T-cell (primary cell): ENCODE measurements at regions of chr3 and their contacts with region 1.

Region 1: GRCh38 chr3:56801662-56802377 is at the start of gene ARHGEF3:
- DNase-seq: peak; percentile 70 to 95 (median 83)
- ATAC-seq: peak; percentile 84 to 91 (median 86)
- H3K4me3 ChIP-seq: peak within 1 kb of the TSS; percentile 80 to 88
- H3K4me3 Mint-ChIP-seq: peak within 1 kb of the TSS; percentile 90 to 97 (median 93)
- H3K27ac ChIP-seq: peak within 1 kb of the TSS; percentile 60
- H3K27ac Mint-ChIP-seq: peak within 1 kb of the TSS; percentile 85 to 92
- H3K4me1 ChIP-seq: peaks cover 16 to 33% of the 10 kb centered on the region in 2 experiments
- H3K4me1 Mint-ChIP-seq: peaks cover 39 to 49% (median 40%) of the 10 kb centered on the region in 3 donors
- H3K27me3 ChIP-seq: no peaks in the 10 kb centered on the region
- H3K27me3 Mint-ChIP-seq: no peaks in the 10 kb centered on the region
- total RNA-seq, gene ARHGEF3: 93.4 to 132 (median 124) TPM

Region 2: GRCh38 chr3:56702490-56703315 is 99.1 kb before region 1 on chr3:
- CTCF ChIA-PET with region 1: interaction called, 11 to 181 read pairs
- POLR2A ChIA-PET with region 1: interaction called, 4 to 14 read pairs
- DNase-seq: peak in 27 of 35 experiments; percentile 13 to 88 (median 43)
- ATAC-seq: peak; percentile 70 to 79 (median 72)
- H3K4me3 ChIP-seq: no peak overlapping the region
- H3K4me3 Mint-ChIP-seq: no peak overlapping the region
- H3K27ac ChIP-seq: no peak overlapping the region
- H3K27ac Mint-ChIP-seq: peak overlapping the region in 1 of 2 donors; percentile 28
- H3K4me1 ChIP-seq: peaks cover 5 to 15% of the 10 kb centered on the region in 2 experiments
- H3K4me1 Mint-ChIP-seq: peaks cover 19 to 27% (median 24%) of the 10 kb centered on the region in 3 donors
- H3K27me3 ChIP-seq: no peaks in the 10 kb centered on the region
- H3K27me3 Mint-ChIP-seq: no peaks in the 10 kb centered on the region

Region 3: GRCh38 chr3:56753206-56753820 is 48.5 kb before region 1 on chr3:
- CTCF ChIA-PET with region 1: interaction called, 11 to 108 read pairs
- POLR2A ChIA-PET with region 1: interaction called in 1 of 2 experiments, 7 read pairs
- DNase-seq: peak in 8 of 35 experiments; percentile 7 to 45 (median 22)
- ATAC-seq: peak in 3 of 4 experiments; percentile 70 to 78 (median 73)
- H3K4me3 ChIP-seq: no peak overlapping the region
- H3K4me3 Mint-ChIP-seq: peak overlapping the region; percentile 81 to 89 (median 87)
- H3K27ac ChIP-seq: peak overlapping the region; percentile 72
- H3K27ac Mint-ChIP-seq: peak overlapping the region; percentile 99
- H3K4me1 ChIP-seq: peaks cover 34 to 50% of the 10 kb centered on the region in 2 experiments
- H3K4me1 Mint-ChIP-seq: peaks cover 70 to 80% (median 73%) of the 10 kb centered on the region in 3 donors
- H3K27me3 ChIP-seq: no peaks in the 10 kb centered on the region
- H3K27me3 Mint-ChIP-seq: no peaks in the 10 kb centered on the region

Region 4: DNA sequence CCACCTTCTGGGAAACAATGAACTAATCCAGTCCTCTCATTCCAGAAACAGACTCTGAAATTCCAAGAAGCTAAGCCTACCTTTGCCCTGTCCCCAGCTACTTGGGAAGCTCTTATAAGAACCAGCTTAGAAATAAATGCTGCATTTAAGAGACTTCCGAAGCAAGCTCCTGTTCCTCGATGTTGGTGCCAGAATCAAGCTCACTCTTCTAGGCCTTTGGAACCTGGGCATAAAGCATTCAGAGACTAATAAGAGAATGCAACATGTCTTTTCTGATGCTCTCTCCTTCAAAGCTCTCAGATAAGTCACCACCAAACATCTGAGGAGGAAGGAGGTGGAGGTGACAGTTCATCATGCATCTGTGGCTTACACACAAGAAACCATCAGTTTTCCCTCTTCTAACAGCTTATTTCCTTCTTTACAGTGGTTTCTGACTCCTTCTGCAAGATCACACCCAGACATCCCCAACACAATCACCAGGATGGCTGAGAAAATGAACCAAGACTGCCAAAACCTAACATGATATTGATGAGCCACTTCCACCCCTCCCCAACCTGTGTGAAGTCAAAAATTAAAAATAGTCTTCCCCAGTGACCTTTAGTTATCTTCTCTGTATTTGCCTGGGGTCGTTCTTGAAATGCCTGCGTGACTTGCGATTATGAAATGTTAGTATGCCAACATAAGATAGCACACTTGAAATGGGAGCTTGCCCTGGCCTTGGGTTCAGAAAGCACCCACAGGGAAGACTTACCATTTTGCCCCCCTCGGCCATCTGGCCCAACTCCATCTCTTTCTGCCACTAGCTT is 11.6 kb before region 1 on chr3:
- CTCF ChIA-PET with region 1: interaction called, 8 to 126 read pairs
- POLR2A ChIA-PET with region 1: interaction called, 23 read pairs
- DNase-seq: peak in 14 of 35 experiments; percentile 9 to 69 (median 28)
- ATAC-seq: peak; percentile 63 to 79 (median 72)
- H3K4me3 ChIP-seq: peak overlapping the region in 1 of 2 donors; percentile 26
- H3K4me3 Mint-ChIP-seq: peak overlapping the region; percentile 17 to 70 (median 52)
- H3K27ac ChIP-seq: peak overlapping the region; percentile 86
- H3K27ac Mint-ChIP-seq: peak overlapping the region; percentile 97 to 99
- H3K4me1 ChIP-seq: peaks cover 70 to 87% of the 10 kb centered on the region in 2 experiments
- H3K4me1 Mint-ChIP-seq: peaks cover 90 to 95% (median 94%) of the 10 kb centered on the region in 3 donors
- H3K27me3 ChIP-seq: no peaks in the 10 kb centered on the region
- H3K27me3 Mint-ChIP-seq: no peaks in the 10 kb centered on the region

Region 5: GRCh38 chr3:56915966-56916586 is 114.3 kb after region 1 on chr3:
- CTCF ChIA-PET with region 1: interaction called, 4 to 19 read pairs
- POLR2A ChIA-PET with region 1: interaction called in 1 of 2 experiments, 7 read pairs
- DNase-seq: peak; percentile 40 to 83 (median 69)
- ATAC-seq: peak; percentile 90 to 94 (median 94)
- H3K4me3 ChIP-seq: peak overlapping the region; percentile 77 to 81
- H3K4me3 Mint-ChIP-seq: peak overlapping the region; percentile 87 to 93 (median 91)
- H3K27ac ChIP-seq: peak overlapping the region; percentile 75
- H3K27ac Mint-ChIP-seq: peak overlapping the region; percentile 97 to 99
- H3K4me1 ChIP-seq: peaks cover 35 to 50% of the 10 kb centered on the region in 2 experiments
- H3K4me1 Mint-ChIP-seq: peaks cover 68 to 85% (median 84%) of the 10 kb centered on the region in 3 donors
- H3K27me3 ChIP-seq: no peaks in the 10 kb centered on the region
- H3K27me3 Mint-ChIP-seq: no peaks in the 10 kb centered on the region

Region 6: GRCh38 chr3:57041604-57042086 is 239.8 kb after region 1 on chr3:
- CTCF ChIA-PET with region 1: no interaction called
- POLR2A ChIA-PET with region 1: no interaction called
- DNase-seq: no peak
- ATAC-seq: no peak
- H3K4me3 ChIP-seq: no peak overlapping the region
- H3K4me3 Mint-ChIP-seq: no peak overlapping the region
- H3K27ac ChIP-seq: no peak overlapping the region
- H3K27ac Mint-ChIP-seq: no peak overlapping the region
- H3K4me1 ChIP-seq: no peaks in the 10 kb centered on the region
- H3K4me1 Mint-ChIP-seq: no peaks in the 10 kb centered on the region
- H3K27me3 ChIP-seq: peaks cover 0 to 16% of the 10 kb centered on the region in 2 experiments
- H3K27me3 Mint-ChIP-seq: peaks cover 18 to 33% of the 10 kb centered on the region in 2 donors